Activated CD4-positive, alpha-beta T cell treated with anti-CD3 and anti-CD28 coated beads, Interleukin-2, amount 10 ng/mL, durations not matched to agents 24 days and 14 days (primary cell): ENCODE measurements at regions of chr2 and their contacts with region 1.

Region 1: GRCh38 chr2:10408649-10409579 is 39.2 kb downstream of the ODC1 start:
- DNase-seq: peak; percentile 95
- H3K4me3 Mint-ChIP-seq: peak overlapping the region; percentile 84
- H3K27ac Mint-ChIP-seq: peak overlapping the region; percentile 96
- H3K4me1 Mint-ChIP-seq: peaks cover 46% of the 10 kb centered on the region
- H3K27me3 Mint-ChIP-seq: no peaks in the 10 kb centered on the region

Region 2: DNA sequence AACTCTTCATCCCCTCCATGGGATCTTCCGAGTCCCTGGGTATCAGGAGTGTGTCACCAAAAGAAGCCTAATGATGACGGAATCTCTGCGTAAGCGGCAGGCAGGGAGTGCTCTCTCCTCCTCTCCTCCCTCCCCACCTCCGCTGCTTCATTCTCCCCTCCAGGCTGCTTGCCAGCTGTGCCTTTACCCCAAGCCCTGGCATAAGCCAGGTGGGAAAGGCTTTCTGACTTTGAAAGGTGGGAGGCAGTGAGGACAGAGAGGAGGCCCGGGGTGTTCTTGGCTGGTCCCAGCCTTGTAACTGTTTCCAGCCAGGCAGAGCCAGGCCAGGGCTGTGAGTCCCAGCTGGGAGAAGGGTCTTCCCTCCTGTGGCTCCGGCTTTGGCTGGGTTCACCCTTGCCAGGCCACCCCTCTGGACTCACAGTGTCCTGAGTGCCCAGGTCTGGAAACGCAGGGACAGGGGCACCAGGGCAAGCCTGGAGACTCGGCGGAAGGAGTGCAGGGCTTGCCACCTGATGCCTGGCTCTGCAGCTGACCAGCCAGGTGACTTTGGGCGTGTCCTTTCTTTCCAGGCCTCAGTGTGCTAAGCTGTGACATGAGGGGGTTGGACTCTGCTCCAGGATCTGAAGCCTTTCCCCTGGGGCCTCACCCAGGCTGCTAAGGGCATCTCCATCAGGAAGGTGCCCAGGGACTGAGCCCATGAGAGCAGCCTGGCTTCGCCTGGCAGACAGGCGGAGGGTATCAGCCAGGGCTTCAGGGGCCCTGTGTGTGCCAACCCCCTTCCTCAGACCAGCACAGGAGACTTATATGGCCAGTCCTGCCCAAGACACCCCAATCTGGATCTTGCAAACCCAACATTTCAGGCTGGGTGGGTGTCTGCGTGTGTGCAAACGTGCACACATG is 139.0 kb before region 1 on chr2:
- intact Hi-C with region 1: loop called (anchors 1 kb)
- DNase-seq: no peak
- H3K4me3 Mint-ChIP-seq: no peak overlapping the region
- H3K27ac Mint-ChIP-seq: no peak overlapping the region
- H3K4me1 Mint-ChIP-seq: peaks cover 6% of the 10 kb centered on the region
- H3K27me3 Mint-ChIP-seq: peaks cover 6% of the 10 kb centered on the region

Region 3: DNA sequence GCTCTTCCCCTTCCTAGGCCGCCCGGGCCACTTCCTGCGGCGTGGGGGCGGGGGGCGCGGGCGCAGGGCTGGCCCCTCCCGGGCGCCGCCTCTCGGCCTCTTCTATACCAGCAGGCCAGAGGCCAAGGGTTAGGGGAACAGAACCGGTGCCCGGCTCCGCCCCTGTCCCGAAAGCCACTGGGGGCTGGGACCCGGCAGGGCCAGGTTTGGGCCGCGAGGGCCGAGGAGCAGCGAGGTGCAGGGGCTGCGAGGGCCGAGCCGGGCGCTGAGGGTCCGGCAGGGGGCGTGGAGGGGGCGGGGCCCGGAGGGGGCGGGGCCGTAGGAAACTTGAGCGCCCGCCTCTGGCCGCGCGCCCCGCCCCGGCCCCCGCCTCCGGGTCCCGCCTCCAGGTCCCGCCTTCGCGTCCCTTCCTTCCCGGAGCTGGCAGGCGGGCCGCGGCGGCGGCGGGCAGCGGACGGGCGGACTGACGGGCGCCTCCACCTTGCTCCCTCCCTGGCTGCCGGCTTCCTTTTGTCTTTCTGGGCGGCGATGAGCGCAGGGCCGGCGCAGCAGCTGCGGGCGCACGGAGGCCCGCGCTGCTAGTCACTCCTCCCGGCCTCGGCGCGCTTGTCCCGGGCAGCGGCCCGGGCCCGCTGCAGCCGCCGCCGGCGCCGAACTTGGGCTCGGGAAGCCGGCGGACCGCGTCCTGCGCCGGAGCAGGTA is 106.3 kb before region 1 on chr2 and contains the start of gene HPCAL1:
- intact Hi-C with region 1: loop called (anchors 1 kb)
- DNase-seq: peak; percentile 96
- H3K4me3 Mint-ChIP-seq: peak within 1 kb of the TSS; percentile 99
- H3K27ac Mint-ChIP-seq: peak within 1 kb of the TSS; percentile 87
- H3K4me1 Mint-ChIP-seq: peaks cover 64% of the 10 kb centered on the region
- H3K27me3 Mint-ChIP-seq: no peaks in the 10 kb centered on the region
- total RNA-seq, gene HPCAL1: 77.1 and 82.8 TPM in 2 replicates

Region 4: DNA sequence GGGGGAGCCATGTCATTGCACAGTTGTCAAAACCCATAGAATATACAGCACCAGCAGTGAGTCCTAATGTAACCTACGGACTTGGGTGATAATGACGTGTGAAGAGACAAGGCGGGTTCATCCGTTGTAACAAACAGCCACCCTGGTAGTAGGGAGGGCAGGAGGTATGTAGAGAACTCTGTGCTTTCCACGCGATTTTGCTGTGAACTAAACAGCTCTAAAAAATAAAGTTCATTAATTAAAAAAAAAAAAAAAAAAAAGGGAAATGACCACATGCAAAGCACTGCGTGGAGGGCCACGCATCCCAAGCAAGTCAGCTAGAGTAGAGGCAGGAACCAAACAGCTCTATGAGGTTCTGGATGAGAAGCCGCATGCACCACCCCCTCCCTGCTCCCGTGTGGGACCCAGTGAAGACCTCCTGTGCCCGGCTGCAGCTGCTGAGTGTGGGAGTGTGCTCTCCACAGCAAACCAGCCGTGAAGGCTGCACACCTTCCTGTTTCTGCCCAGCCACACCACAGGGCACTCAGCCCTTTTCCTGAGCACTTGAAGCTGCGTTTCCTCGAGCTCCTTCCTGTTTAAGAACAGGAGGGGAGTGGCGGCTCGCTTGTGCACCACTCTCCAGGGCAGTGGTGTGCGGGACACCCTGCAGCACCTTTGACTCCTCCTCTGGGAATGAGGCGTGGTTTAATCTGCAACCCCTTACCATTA is 26.4 kb before region 1 on chr2:
- intact Hi-C with region 1: loop called (anchors 2 kb)
- DNase-seq: peak; percentile 81
- H3K4me3 Mint-ChIP-seq: peak overlapping the region; percentile 57
- H3K27ac Mint-ChIP-seq: no peak overlapping the region
- H3K4me1 Mint-ChIP-seq: peaks cover 74% of the 10 kb centered on the region
- H3K27me3 Mint-ChIP-seq: no peaks in the 10 kb centered on the region